Activated CD4-positive, alpha-beta memory T cell treated with anti-CD3 and anti-CD28 coated beads, Interleukin-2, amount 10 ng/mL, durations not matched to agents 7 days and 5 days (primary cell): ENCODE measurements at regions of chrX and their contacts with region 1.

Region 1: GRCh38 chrX:24498975-24499374 is 33.9 kb downstream of the PDK3 start:
- DNase-seq: no peak
- H3K4me3 Mint-ChIP-seq: no peak overlapping the region
- H3K27ac Mint-ChIP-seq: no peak overlapping the region
- H3K4me1 Mint-ChIP-seq: peaks cover 19% of the 10 kb centered on the region
- H3K27me3 Mint-ChIP-seq: no peaks in the 10 kb centered on the region

Region 2: GRCh38 chrX:24371391-24371972 is 127.5 kb before region 1 on chrX:
- CTCF ChIA-PET with region 1: interaction called, 47 read pairs
- POLR2A ChIA-PET with region 1: no interaction called
- DNase-seq: peak; percentile 59
- H3K4me3 Mint-ChIP-seq: peak overlapping the region; percentile 41
- H3K27ac Mint-ChIP-seq: no peak overlapping the region
- H3K4me1 Mint-ChIP-seq: peaks cover 16% of the 10 kb centered on the region
- H3K27me3 Mint-ChIP-seq: no peaks in the 10 kb centered on the region

Region 3: DNA sequence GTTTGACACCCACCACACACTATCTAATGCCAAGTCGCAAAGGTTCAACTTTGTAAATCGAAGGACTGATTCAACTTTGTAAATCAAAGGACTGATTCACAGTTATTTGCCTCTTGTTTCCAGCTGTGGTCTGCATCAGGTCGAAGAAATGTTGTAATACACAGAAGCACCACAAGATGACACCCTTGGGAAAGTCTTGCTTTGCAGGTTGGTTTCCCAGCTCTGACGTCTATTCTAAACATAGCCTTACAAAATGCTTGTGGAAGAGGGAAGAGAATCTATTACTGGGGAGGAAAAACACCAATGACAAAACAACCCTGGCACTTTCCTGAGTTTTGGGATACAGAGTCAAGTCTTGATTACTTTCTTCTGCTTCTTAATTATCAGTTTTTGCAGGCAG is 103.2 kb before region 1 on chrX:
- CTCF ChIA-PET with region 1: interaction called, 85 read pairs
- POLR2A ChIA-PET with region 1: interaction called, 5 read pairs
- DNase-seq: peak; percentile 26
- H3K4me3 Mint-ChIP-seq: no peak overlapping the region
- H3K27ac Mint-ChIP-seq: no peak overlapping the region
- H3K4me1 Mint-ChIP-seq: no peaks in the 10 kb centered on the region
- H3K27me3 Mint-ChIP-seq: peaks cover 10% of the 10 kb centered on the region

Region 4: DNA sequence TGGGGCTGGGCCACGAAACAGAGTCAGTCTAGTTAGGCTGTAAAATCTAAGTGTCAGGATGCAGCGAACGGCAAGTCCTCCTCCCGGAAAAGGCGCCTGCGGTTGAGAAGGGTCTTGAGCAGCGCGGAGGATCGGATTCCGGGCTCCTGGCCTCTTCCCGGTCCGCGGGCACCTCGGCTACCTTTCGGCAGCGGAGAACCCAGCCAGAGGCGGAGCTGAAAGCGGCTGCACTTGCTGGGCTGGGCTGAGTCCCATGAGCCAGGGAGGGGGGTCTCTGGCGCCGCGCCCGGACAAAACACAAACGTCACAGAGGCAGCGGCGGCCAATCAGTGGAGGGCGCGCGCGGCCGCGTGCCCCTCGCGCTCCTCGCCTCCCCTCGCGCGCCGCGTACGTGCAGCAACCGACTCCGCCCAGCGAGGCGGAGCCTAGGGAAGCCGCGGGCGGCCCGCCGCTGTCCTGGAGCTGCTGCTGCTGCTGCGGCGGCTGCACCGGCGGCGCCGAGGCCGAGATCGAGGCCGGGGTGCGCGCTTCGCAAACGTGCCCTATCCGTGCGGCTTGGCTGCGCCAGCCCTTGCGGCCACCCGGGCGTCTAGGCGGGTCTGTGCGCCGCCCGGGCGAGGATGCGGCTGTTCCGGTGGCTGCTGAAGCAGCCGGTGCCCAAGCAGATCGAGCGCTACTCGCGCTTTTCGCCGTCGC is 34.0 kb before region 1 on chrX and contains the start of gene PDK3:
- CTCF ChIA-PET with region 1: interaction called, 21 read pairs
- POLR2A ChIA-PET with region 1: interaction called, 15 read pairs
- DNase-seq: peak; percentile 86
- H3K4me3 Mint-ChIP-seq: peak within 1 kb of the TSS; percentile 79
- H3K27ac Mint-ChIP-seq: peak within 1 kb of the TSS; percentile 83
- H3K4me1 Mint-ChIP-seq: peaks cover 35% of the 10 kb centered on the region
- H3K27me3 Mint-ChIP-seq: no peaks in the 10 kb centered on the region
- total RNA-seq, gene PDK3: 28.0 to 29.0 TPM

Region 5: GRCh38 chrX:24479924-24480323 is 19.1 kb before region 1 on chrX:
- CTCF ChIA-PET with region 1: interaction called, 29 read pairs
- POLR2A ChIA-PET with region 1: interaction called, 9 read pairs
- DNase-seq: peak; percentile 83
- H3K4me3 Mint-ChIP-seq: peak overlapping the region; percentile 70
- H3K27ac Mint-ChIP-seq: peak overlapping the region; percentile 98
- H3K4me1 Mint-ChIP-seq: peaks cover 68% of the 10 kb centered on the region
- H3K27me3 Mint-ChIP-seq: no peaks in the 10 kb centered on the region